A549 (cell line): ENCODE measurements at regions of chr11 and their contacts with region 1.

Region 1: GRCh38 chr11:2532704-2533586 is 88.1 kb downstream of the KCNQ1 start:
- DNase-seq: peak; percentile 83 to 95
- ATAC-seq: peak; percentile 77 to 92
- H3K4me3 ChIP-seq: no peak overlapping the region
- H3K27ac ChIP-seq: no peak overlapping the region
- H3K4me1 ChIP-seq: no peaks in the 10 kb centered on the region
- CTCF ChIP-seq: peak; percentile 99
- EP300 ChIP-seq: no peak
- POLR2A ChIP-seq: no peak
- RAD21 ChIP-seq: peak; percentile 99 to 100

Region 2: DNA sequence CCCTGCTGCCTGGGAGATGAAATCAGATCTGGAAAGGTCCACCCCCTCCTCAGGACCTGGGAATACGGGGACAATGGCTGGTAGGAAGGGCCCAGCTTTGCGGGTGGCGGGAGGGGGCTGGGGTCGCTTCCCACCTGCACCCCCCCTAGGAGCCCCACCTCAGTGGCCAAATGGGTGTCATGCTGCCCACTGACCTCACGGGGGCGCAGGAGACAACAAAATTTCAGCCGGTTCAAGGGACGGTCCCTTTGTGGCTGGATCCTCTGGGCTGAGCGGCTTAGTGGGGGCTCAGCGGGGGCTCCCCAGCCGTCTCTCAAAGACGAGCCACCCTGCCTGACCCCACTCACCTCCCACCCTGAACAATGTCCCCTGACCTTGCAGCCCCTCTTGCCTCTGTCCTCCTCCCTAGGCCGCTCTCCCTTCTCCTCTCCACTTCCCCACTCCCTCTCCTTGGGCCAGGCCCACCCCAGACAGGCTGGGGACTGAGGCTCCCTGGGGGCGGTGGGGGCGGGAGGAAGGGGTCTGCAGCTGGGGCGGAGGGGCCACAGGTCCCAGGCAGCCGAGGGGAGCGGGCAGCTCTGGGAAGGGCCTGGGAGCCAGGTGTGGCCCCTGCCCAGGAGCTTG is 496.0 kb before region 1 on chr11:
- CTCF ChIA-PET with region 1: no interaction called
- POLR2A ChIA-PET with region 1: no interaction called
- DNase-seq: no peak
- ATAC-seq: peak; percentile 44 to 85; a peak in 3 of 6 replicates
- H3K4me3 ChIP-seq: no peak overlapping the region
- H3K27ac ChIP-seq: no peak overlapping the region
- H3K4me1 ChIP-seq: no peaks in the 10 kb centered on the region
- CTCF ChIP-seq: no peak
- EP300 ChIP-seq: no peak
- POLR2A ChIP-seq: no peak
- RAD21 ChIP-seq: no peak

Region 3: DNA sequence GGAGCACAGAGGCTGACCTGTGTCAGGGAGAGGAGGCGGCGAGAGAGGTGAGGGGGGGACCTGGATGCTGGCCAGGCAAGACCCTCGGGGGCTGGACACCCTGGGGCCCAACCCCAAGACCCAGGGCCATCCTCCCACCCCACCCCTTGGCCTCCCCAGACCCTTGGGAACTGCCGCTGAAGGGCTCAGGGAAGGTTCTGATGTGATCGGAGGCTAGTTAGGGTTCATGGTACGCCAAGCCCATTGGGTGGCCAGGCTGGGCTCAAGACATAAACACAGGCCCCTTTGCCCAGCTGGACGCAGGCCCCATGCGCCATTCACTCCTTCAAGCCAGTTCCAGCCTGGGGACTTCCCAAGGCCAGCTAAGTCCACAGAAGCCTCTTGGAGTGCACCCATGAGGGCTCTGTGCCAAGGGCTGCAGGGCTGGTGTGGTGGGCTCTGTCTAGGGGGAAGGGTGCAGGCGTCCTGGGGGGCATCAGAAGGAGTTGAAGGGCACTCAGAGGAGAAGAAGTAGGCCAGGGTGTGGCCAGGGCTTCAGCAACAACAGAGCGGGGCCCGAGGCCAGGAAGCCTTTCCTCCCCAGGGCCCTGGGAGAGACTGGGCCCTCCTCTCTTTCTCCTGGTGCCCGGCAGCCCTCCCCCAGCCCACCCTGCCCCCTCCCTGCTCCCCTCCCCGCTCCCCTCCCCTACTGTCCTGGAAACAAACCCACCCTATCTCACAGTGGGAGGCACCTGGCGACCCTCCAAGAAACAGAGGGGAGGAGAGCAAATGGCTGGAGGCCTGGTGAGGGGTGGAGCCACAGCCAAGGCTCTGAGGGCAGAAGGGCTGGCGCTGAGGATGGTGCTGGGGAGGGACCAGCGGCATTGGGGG is 218.2 kb before region 1 on chr11:
- CTCF ChIA-PET with region 1: interaction called, 34 read pairs
- POLR2A ChIA-PET with region 1: no interaction called
- DNase-seq: no peak
- ATAC-seq: peak in 1 of 2 experiments; percentile 59; a peak in 3 of 6 replicates
- H3K4me3 ChIP-seq: no peak overlapping the region
- H3K27ac ChIP-seq: peak overlapping the region in 1 of 2 experiments; percentile 40; a peak in 3 of 6 replicates
- H3K4me1 ChIP-seq: peaks cover 4% of the 10 kb centered on the region; the same call in 1 of the 3 replicates
- CTCF ChIP-seq: no peak
- EP300 ChIP-seq: no peak
- POLR2A ChIP-seq: no peak
- RAD21 ChIP-seq: no peak

Region 4: GRCh38 chr11:2444821-2445745 is 87.9 kb before region 1 on chr11 and contains the start of gene KCNQ1:
- CTCF ChIA-PET with region 1: interaction called, 49 read pairs
- POLR2A ChIA-PET with region 1: no interaction called
- DNase-seq: peak; percentile 28 to 59
- ATAC-seq: peak; percentile 45 to 68
- H3K4me3 ChIP-seq: peak within 1 kb of the TSS; percentile 72
- H3K27ac ChIP-seq: peak within 1 kb of the TSS; percentile 53 to 80; a peak in 5 of 6 replicates
- H3K4me1 ChIP-seq: peaks cover 6% of the 10 kb centered on the region
- CTCF ChIP-seq: no peak
- EP300 ChIP-seq: no peak
- POLR2A ChIP-seq: no peak
- RAD21 ChIP-seq: no peak
- polyA plus RNA-seq, gene KCNQ1: 0.17 and 0.26 TPM in 2 replicates

Region 5: GRCh38 chr11:2549876-2550620 is 17.1 kb after region 1 on chr11:
- CTCF ChIA-PET with region 1: interaction called, 57 read pairs
- POLR2A ChIA-PET with region 1: no interaction called
- DNase-seq: no peak
- ATAC-seq: no peak
- H3K4me3 ChIP-seq: no peak overlapping the region
- H3K27ac ChIP-seq: no peak overlapping the region
- H3K4me1 ChIP-seq: no peaks in the 10 kb centered on the region
- CTCF ChIP-seq: no peak
- EP300 ChIP-seq: no peak
- POLR2A ChIP-seq: no peak
- RAD21 ChIP-seq: no peak

Region 6: DNA sequence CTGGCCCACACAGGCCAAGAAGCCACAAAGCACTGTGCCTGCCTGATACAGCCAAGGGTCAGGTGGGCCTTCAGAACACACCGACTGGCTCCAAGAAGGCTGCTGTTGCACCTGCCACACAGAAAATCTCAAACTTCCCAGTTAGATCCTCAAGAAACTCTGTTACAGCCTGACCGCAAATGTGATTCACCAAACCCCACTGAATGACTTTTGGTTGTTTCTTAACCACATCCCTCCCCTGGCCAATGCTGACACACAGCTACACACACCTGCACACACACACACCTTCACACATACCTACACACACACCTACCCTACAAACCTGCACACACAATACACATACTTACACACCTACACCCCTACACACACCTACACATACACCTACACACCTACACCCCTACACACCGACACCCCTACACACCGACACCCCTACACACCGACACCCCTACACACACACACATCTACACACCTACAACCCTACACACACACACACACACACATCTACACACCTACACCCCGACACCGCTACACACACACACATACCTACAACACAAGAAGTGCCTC is 321.1 kb after region 1 on chr11:
- CTCF ChIA-PET with region 1: interaction called, 11 read pairs
- POLR2A ChIA-PET with region 1: no interaction called
- DNase-seq: no peak
- ATAC-seq: no peak
- H3K4me3 ChIP-seq: no peak overlapping the region
- H3K27ac ChIP-seq: no peak overlapping the region
- H3K4me1 ChIP-seq: peaks cover 6% of the 10 kb centered on the region; the same call in 2 of the 3 replicates
- CTCF ChIP-seq: no peak
- EP300 ChIP-seq: no peak
- POLR2A ChIP-seq: no peak
- RAD21 ChIP-seq: no peak

Region 7: GRCh38 chr11:2901854-2902783 is 369.2 kb after region 1 on chr11:
- CTCF ChIA-PET with region 1: interaction called, 44 read pairs
- POLR2A ChIA-PET with region 1: no interaction called
- DNase-seq: peak; percentile 94 to 95
- ATAC-seq: peak; percentile 69 to 88
- H3K4me3 ChIP-seq: peak overlapping the region; percentile 90
- H3K27ac ChIP-seq: peak overlapping the region; percentile 97 to 98
- H3K4me1 ChIP-seq: peaks cover 38% of the 10 kb centered on the region
- CTCF ChIP-seq: no peak
- EP300 ChIP-seq: no peak
- POLR2A ChIP-seq: peak; percentile 37
- RAD21 ChIP-seq: no peak